ENCODE measurements at regions of chr21 and their contacts with region 1.

Region 1: GRCh38 chr21:14259747-14260146 is 43.8 kb downstream of the RBM11 start:
- DNase-seq: no peak
- ATAC-seq: peak; percentile 82

Region 2: GRCh38 chr21:14850394-14850793 is 590.6 kb after region 1 on chr21:
- intact Hi-C with region 1: loop called (anchors 10 kb)
- DNase-seq: no peak
- ATAC-seq: no peak

Region 3: DNA sequence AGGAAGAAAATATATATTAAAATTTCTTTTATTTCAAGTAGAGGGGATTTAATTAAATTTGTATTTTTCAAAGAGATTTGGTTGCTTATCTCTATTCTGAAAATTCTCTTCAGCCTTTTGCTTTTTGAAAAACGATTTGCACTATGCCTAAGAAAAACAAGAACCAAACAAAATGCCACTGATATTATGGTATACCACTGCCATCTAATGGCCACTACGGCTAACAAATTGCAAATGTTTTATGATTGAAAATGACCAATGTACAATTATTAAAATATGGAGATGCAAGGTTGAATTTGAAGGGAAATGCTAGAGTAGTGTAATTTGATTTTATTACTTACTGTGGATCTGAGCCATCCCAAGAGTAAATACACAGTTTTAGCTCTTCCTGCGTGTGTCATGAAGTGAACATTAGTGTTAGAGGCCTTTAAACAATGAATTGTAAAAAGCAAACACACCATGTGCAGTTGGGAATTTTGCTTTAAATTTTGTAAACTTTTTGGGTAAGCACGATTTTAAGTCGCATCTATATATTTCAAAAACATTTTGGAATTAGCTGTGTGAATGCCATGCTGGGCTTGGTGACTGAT is 1332.6 kb after region 1 on chr21:
- intact Hi-C with region 1: loop called (anchors 10 kb)
- DNase-seq: no peak
- ATAC-seq: peak; percentile 58

Measured in Right ventricle myocardium superior (tissue), 1 donor.